ENCODE measurements at regions of chr10 and their contacts with region 1.

Region 1: GRCh38 chr10:63497321-63497720 is 23.9 kb upstream of the REEP3 start:
- DNase-seq: no peak
- ATAC-seq: no peak
- H3K4me3 Mint-ChIP-seq: no peak overlapping the region
- H3K27ac Mint-ChIP-seq: no peak overlapping the region
- H3K4me1 Mint-ChIP-seq: peaks cover 24% of the 10 kb centered on the region
- H3K27me3 Mint-ChIP-seq: no peaks in the 10 kb centered on the region
- CTCF ChIP-seq: no peak

Region 2: GRCh38 chr10:63515002-63515763 is 17.9 kb after region 1 on chr10:
- CTCF ChIA-PET with region 1: no interaction called
- POLR2A ChIA-PET with region 1: interaction called, 3 read pairs
- intact Hi-C with region 1: loop called (anchors 2 kb)
- DNase-seq: no peak
- ATAC-seq: peak; percentile 49
- H3K4me3 Mint-ChIP-seq: no peak overlapping the region
- H3K27ac Mint-ChIP-seq: peak overlapping the region; percentile 31
- H3K4me1 Mint-ChIP-seq: peaks cover 43% of the 10 kb centered on the region
- H3K27me3 Mint-ChIP-seq: no peaks in the 10 kb centered on the region
- CTCF ChIP-seq: no peak

Region 3: GRCh38 chr10:64036311-64036930 is 539.1 kb after region 1 on chr10:
- CTCF ChIA-PET with region 1: no interaction called
- POLR2A ChIA-PET with region 1: no interaction called
- intact Hi-C with region 1: no loop called
- DNase-seq: no peak
- ATAC-seq: no peak
- H3K4me3 Mint-ChIP-seq: no peak overlapping the region
- H3K27ac Mint-ChIP-seq: no peak overlapping the region
- H3K4me1 Mint-ChIP-seq: peaks cover 8% of the 10 kb centered on the region
- H3K27me3 Mint-ChIP-seq: peaks cover 2% of the 10 kb centered on the region
- CTCF ChIP-seq: no peak